Endothelial cell of umbilical vein (primary cell): ENCODE measurements at regions of chr12 and their contacts with region 1.

Region 1: GRCh38 chr12:28130625-28131598 is 59.3 kb upstream of the CCDC91 start:
- DNase-seq: peak; percentile 99
- H3K4me3 ChIP-seq: no peak overlapping the region
- H3K27ac ChIP-seq: peak overlapping the region; percentile 84
- H3K4me1 ChIP-seq: peaks cover 21% of the 10 kb centered on the region
- H3K27me3 ChIP-seq: no peaks in the 10 kb centered on the region
- CTCF ChIP-seq: no peak
- POLR2A ChIP-seq: no peak

Region 2: GRCh38 chr12:28089338-28089737 is 41.6 kb before region 1 on chr12:
- CTCF ChIA-PET with region 1: no interaction called
- POLR2A ChIA-PET with region 1: no interaction called
- dilution Hi-C with region 1: no loop called
- intact Hi-C with region 1: loop called (anchors 2 kb)
- DNase-seq: peak; percentile 37
- H3K4me3 ChIP-seq: no peak overlapping the region
- H3K27ac ChIP-seq: no peak overlapping the region
- H3K4me1 ChIP-seq: peaks cover 20% of the 10 kb centered on the region
- H3K27me3 ChIP-seq: no peaks in the 10 kb centered on the region
- CTCF ChIP-seq: no peak
- POLR2A ChIP-seq: no peak